ENCODE measurements at regions of chr10 and their contacts with region 1.

Region 1: DNA sequence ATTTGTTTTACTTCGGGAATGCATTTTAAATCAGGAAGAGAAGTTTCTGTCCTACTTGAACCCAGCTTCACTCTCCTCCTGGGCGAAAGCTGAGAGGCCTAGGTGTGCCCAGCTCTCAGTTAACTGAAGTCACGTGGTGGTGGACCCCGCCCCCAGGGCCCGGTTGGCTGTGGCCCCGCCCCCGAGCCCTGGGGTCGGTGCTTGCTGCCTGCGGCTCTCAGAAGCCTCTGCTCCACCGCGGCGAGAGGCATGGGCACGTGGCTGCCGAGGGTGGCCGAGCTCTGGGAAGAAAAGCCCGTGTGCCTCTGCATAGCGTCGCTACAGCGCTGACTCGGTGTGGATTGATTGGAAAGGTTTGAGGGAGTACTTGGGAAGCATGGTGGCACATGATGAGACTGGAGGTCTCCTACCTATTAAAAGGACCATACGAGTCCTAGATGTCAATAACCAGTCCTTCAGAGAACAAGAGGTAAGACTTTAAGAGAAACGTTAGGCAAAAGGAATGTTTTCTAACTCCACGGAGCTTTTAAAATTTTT is 34.1 kb downstream of the NET1 start:
- DNase-seq: no peak
- H3K4me3 ChIP-seq: peak overlapping the region; percentile 78
- CTCF ChIP-seq: no peak

Region 2: DNA sequence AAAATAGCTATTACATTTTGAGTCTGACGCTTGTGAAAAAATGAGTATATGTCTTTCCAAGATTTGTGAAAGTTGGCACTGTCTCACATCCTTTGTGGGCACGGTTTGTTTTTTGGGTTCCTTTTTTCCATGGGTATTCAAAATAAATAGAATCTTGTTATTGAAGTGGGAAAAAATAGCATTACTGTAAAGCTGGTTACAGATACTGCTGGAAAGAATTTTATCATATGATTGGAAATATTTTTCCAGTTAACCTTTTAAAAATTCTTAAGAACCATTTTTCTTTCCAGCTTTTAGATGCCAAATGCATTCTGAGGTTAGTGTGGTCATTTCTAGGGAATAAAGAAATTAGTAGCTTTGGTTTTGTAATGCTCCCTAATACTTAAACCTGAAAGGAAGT is 22.7 kb before region 1 on chr10:
- CTCF ChIA-PET with region 1: interaction called, 25 read pairs
- POLR2A ChIA-PET with region 1: no interaction called
- DNase-seq: no peak
- H3K4me3 ChIP-seq: no peak overlapping the region
- CTCF ChIP-seq: no peak

Region 3: DNA sequence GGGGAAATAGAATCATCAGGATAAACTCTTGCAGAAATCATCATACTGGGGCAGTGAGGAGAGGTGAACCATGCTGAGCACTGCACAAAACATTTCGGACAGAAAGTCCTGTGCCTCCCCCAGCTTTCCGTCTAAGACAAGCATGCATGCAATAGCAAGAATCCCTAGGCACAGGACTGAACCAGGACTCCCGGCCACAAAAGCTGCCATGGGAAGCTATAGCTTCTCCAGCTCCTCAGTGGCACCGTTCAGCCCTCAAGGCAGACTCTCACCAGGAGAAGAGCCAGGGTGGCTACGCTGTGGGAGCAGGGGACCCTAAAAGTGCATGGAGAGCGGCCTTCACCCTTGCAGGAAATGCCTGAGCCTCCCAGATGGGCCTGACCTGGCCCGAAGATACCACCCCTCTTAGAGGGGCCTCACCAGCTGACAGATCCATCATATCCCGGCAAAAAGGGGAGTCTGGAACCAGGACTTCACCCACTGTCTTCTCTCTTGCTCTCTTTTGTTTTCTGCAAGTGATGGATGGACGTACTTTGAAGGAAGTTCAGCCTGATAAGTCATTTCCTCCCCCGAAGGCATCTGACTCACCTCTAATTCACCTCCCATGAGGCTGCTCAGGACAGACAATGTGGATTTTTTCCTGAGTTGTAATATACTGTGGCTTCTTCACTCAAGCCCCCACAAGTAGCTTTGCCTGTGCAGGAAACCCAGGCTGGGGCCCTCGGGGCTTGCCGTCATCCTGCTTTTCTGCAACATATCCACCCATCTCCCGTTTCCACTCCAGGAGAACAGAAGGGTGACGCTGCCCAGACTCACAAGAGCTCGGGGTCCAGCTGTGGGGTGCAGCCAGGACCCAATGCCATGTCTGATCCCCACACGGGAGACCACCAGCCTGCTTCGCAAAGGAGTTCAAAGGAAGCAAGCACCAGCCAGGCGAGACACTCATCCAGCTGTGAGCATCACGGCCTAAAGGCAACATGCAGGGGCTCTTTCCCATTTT is 149.4 kb after region 1 on chr10:
- CTCF ChIA-PET with region 1: interaction called, 19 read pairs
- POLR2A ChIA-PET with region 1: interaction called, 10 read pairs
- DNase-seq: peak; percentile 73
- H3K4me3 ChIP-seq: peak overlapping the region; percentile 49
- CTCF ChIP-seq: no peak

Region 4: GRCh38 chr10:5623081-5623748 is 176.8 kb after region 1 on chr10:
- CTCF ChIA-PET with region 1: interaction called, 1,068 read pairs
- POLR2A ChIA-PET with region 1: interaction called, 52 read pairs
- DNase-seq: peak; percentile 21
- H3K4me3 ChIP-seq: no peak overlapping the region
- CTCF ChIP-seq: peak; percentile 96

Region 5: GRCh38 chr10:5873515-5873995 is 427.1 kb after region 1 on chr10:
- CTCF ChIA-PET with region 1: interaction called, 14 read pairs
- POLR2A ChIA-PET with region 1: no interaction called
- DNase-seq: no peak
- H3K4me3 ChIP-seq: no peak overlapping the region
- CTCF ChIP-seq: peak; percentile 50